Activated CD4-positive, alpha-beta memory T cell treated with anti-CD3 and anti-CD28 coated beads for 36 hours (primary cell): ENCODE measurements at regions of chr4 and their contacts with region 1.

Region 1: DNA sequence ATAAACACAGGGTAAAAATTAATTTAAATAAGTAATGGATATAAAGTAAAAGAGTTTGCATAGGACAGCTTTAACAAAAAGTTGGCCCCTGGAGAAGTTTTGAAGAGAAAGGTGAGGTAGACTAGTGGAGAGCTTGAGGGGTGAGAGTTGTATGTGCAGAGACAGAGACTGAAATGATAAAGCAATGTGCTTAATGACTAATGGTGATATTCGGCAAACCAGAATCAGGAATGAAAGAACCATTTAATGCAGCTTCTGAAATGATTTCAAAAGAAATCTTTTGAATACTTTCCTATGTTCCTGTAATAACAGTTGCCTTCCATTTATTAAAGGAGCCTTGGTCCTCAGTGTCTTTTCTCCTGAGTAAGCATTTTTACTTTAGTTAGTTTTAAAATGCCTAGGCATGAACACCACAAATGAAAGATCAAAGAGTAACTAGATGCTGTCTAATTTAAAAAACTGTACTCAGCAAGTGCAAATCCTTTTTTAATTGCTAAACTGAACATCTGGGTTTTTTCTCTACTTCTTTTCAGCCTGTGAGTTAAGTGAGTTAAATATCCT is 28.5 kb downstream of the CAMK2D start:
- DNase-seq: no peak
- H3K4me3 Mint-ChIP-seq: peak overlapping the region; percentile 0
- H3K27ac Mint-ChIP-seq: peak overlapping the region; percentile 26
- H3K4me1 Mint-ChIP-seq: peaks cover 62% of the 10 kb centered on the region
- H3K27me3 Mint-ChIP-seq: no peaks in the 10 kb centered on the region

Region 2: DNA sequence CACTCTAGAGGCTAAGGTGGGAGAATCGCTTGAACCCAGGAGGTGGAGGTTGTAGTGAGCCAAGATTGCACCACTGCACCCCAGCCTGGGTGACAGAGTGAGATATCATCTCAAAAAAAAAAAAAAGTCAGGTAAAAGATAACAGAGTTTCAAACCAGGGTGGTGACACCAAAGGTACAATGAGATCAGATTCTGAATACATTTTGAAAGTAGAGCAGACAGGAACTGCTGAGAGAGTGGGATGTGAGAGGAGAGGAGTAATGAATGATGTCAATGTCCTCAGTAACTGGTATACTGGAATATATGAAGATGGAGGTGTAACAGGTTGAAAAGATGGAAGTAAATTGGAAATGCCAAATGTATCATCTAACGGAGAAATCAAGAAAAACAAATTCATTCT is 107.1 kb before region 1 on chr4:
- CTCF ChIA-PET with region 1: no interaction called
- POLR2A ChIA-PET with region 1: no interaction called
- intact Hi-C with region 1: loop called (anchors 1 kb)
- DNase-seq: peak; percentile 36
- H3K4me3 Mint-ChIP-seq: no peak overlapping the region
- H3K27ac Mint-ChIP-seq: peak overlapping the region; percentile 13
- H3K4me1 Mint-ChIP-seq: peaks cover 45% of the 10 kb centered on the region
- H3K27me3 Mint-ChIP-seq: no peaks in the 10 kb centered on the region

Region 3: GRCh38 chr4:113697429-113697828 is 35.6 kb before region 1 on chr4:
- CTCF ChIA-PET with region 1: interaction called, 3 read pairs
- POLR2A ChIA-PET with region 1: interaction called, 4 read pairs
- intact Hi-C with region 1: loop called (anchors 1 kb)
- DNase-seq: no peak
- H3K4me3 Mint-ChIP-seq: no peak overlapping the region
- H3K27ac Mint-ChIP-seq: peak overlapping the region; percentile 67
- H3K4me1 Mint-ChIP-seq: peaks cover 36% of the 10 kb centered on the region
- H3K27me3 Mint-ChIP-seq: no peaks in the 10 kb centered on the region

Region 4: GRCh38 chr4:113711883-113712662 is 21.0 kb before region 1 on chr4:
- CTCF ChIA-PET with region 1: no interaction called
- POLR2A ChIA-PET with region 1: no interaction called
- intact Hi-C with region 1: loop called (anchors 1 kb)
- DNase-seq: no peak
- H3K4me3 Mint-ChIP-seq: no peak overlapping the region
- H3K27ac Mint-ChIP-seq: no peak overlapping the region
- H3K4me1 Mint-ChIP-seq: peaks cover 40% of the 10 kb centered on the region
- H3K27me3 Mint-ChIP-seq: no peaks in the 10 kb centered on the region

Region 5: DNA sequence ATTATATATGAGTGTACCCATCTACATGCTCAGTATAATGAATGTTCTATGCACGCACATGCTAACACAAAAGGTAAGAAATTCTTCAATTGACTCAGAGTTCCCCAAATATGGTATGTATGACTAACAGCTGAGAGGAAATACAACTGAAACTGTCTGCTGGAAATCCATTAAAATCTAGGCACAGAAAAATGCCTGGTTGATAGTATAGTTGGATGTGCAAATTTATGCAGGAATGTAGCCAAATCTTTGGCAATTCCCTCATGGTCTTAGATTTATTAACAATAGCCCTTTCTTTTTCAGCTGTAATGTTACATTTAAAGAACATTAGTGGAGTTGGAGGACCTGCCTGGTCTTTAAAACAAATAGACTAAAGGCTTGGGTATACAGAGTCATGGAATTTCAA is 23.0 kb after region 1 on chr4:
- CTCF ChIA-PET with region 1: no interaction called
- POLR2A ChIA-PET with region 1: interaction called, 8 read pairs
- intact Hi-C with region 1: loop called (anchors 1 kb)
- DNase-seq: no peak
- H3K4me3 Mint-ChIP-seq: peak overlapping the region; percentile 28
- H3K27ac Mint-ChIP-seq: peak overlapping the region; percentile 66
- H3K4me1 Mint-ChIP-seq: peaks cover 44% of the 10 kb centered on the region
- H3K27me3 Mint-ChIP-seq: no peaks in the 10 kb centered on the region